Heart right ventricle (tissue), 16 donors: ENCODE measurements at regions of chr1 and their contacts with region 1.

Region 1: DNA sequence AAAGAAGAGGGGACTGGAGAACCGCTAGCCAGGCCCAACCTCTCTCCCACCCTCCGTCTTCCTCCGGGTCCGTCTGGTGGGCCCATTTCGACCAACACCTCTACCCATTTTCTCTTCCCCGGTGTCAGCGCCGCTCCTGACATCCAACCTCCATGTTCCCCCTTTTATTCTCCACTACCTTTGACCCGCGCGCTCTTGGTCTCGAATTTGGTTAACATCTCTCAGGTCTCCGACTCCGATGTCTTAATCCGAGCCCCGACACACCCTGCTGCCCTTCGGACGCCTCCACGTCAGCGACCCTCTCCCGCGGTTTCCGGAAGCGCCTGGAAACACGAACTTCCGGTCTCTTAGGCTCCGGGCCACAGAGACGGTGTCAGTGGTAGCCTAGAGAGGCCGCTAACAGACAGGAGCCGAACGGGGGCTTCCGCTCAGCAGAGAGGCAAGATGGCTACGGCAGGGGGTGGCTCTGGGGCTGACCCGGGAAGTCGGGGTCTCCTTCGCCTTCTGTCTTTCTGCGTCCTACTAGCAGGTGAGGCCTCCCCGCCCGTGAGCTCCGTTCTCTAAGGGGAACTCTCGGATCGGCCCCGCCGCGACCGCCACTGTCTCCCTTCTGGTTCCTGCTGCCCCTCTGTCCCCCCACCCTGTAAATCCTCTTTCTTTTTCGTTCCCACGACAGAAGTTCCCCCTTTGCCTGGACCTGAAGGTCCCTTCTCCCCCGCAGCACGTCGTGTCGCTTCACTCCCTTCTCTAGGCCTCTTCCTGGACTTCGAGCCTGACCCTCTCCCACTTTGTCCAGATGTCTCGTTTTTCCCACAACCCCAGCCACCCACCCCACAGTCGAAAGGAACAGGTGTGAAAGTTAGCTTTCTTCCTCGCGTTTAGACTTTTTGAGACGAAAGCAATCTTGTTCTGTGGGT is at the starts of genes COPA and NCSTN:
- DNase-seq: peak; percentile 90 to 96
- ATAC-seq: peak; percentile 98 to 100 (median 99)
- H3K4me3 ChIP-seq: peak within 1 kb of the TSS; percentile 63 to 96 (median 82)
- H3K27ac ChIP-seq: peak within 1 kb of the TSS; percentile 51 to 97 (median 90)
- H3K4me1 ChIP-seq: peaks cover 0 to 77% (median 41%) of the 10 kb centered on the region in 9 donors
- H3K27me3 ChIP-seq: no peaks in the 10 kb centered on the region
- CTCF ChIP-seq: peak in 3 of 9 donors; percentile 8 to 19 (median 15)
- total RNA-seq, gene COPA: 77.7 to 122 (median 112) TPM
- total RNA-seq, gene NCSTN: 59.5 to 87.9 (median 71.2) TPM

Region 2: DNA sequence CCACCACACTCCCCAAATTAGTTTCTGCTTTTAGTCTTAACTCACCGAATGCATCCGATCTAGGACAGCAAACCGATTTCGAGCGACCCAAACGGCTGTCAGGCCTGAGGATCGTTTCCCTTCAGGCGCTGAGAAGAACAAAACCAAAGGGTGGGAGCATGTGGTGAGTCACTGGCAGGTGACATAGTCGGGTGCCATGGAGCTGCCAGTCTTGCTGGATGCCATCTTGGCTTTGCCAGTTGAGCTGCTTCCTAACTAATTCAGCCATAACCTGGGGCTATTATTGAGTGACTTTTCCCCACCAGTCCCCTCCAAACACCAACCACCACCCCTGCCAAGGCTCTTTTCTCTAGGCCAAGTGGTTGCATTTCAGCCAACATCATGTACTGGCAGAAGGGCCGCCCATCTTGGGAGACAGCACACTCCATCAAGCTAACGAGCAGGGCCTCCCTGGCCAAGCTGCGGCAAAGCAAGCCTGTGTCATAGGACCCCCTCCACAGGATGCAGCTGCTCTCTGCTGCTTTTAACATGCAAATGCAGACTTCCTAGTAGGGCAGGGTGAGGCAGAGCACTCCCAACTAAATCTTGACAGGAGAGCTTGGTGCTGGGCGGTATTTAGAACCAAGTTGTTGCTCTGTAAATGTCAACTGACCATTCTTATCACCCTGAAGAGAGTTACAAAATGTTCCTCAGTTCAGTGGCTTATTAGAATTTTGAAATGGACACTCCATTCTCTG is 35.9 kb before region 1 on chr1:
- intact Hi-C with region 1: loop called in 1 of 10 experiments (anchors 5 kb)
- DNase-seq: no peak
- ATAC-seq: peak in 4 of 8 donors; percentile 25 to 69 (median 58)
- H3K4me3 ChIP-seq: no peak overlapping the region
- H3K27ac ChIP-seq: no peak overlapping the region
- H3K4me1 ChIP-seq: no peaks in the 10 kb centered on the region
- H3K27me3 ChIP-seq: no peaks in the 10 kb centered on the region
- CTCF ChIP-seq: no peak

Region 3: GRCh38 chr1:160362168-160362957 is 19.2 kb after region 1 on chr1:
- intact Hi-C with region 1: no loop called
- DNase-seq: no peak
- ATAC-seq: no peak
- H3K4me3 ChIP-seq: no peak overlapping the region
- H3K27ac ChIP-seq: no peak overlapping the region
- H3K4me1 ChIP-seq: no peaks in the 10 kb centered on the region
- H3K27me3 ChIP-seq: no peaks in the 10 kb centered on the region
- CTCF ChIP-seq: no peak

Region 4: DNA sequence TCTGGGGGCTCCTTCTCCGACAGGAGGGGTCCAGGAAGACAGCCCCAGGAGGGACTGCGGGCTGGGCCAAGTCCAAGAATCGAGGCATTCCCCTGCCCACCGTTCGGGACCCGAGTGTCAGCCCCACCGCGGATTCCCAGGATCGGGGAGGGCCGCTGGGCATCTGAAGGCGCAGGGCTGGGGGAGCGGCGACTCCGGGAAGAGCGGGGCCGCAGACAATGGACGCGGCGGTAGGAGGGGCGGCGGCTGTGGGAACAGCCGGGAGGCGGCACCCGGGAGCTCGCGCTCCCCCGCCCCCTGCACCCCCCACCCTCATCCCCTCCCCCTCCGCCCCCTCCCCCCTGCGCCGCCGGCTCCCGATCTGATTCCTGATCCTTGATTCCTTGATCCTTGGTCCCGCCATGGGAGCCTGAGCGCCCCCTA is 57.0 kb after region 1 on chr1 and contains the start of gene VANGL2:
- intact Hi-C with region 1: loop called in 1 of 10 experiments (anchors 2 kb)
- DNase-seq: peak; percentile 84 to 88
- ATAC-seq: peak; percentile 68 to 88 (median 82)
- H3K4me3 ChIP-seq: peak within 1 kb of the TSS; percentile 58 to 87 (median 75)
- H3K27ac ChIP-seq: peak within 1 kb of the TSS in 9 of 10 donors; percentile 49 to 80 (median 56)
- H3K4me1 ChIP-seq: peaks cover 4 to 43% (median 30%) of the 10 kb centered on the region in 9 donors
- H3K27me3 ChIP-seq: peaks cover 0 to 31% (median 0%) of the 10 kb centered on the region in 7 donors
- CTCF ChIP-seq: peak in 1 of 9 donors; percentile 8
- total RNA-seq, gene VANGL2: 1.2 to 4.1 (median 2.1) TPM

Region 5: DNA sequence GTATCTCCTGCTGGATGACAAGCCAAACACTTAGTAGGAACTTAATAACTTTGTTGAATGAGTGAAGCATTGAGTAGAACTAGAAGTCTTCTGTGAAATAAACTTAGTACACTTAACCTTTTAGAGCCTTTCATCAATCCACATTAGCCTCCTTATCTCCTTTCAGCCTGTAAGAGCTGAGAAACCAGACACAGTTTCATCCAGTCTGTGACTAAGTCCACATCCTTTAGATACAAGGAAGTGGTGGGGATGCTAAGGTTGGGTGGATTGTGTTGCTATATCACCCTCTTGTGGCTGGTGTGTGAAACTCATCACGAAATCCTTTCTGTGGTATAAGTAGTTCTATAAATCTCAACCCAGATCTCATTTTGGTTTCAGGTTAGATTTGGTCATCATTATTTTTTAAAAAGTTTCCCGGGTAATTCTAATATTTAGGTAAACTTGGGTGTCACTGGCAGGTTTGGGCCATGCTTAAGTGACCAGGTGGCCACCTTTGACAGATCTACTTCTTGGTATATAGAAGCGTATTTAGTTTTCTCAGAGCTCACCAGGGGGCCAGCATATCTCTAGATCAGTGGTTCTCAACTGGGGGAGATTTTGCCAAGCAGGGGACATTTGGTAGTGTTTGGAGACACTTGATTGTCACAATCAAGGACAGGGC is 263.9 kb after region 1 on chr1:
- intact Hi-C with region 1: loop called in 1 of 10 experiments (anchors 5 kb)
- DNase-seq: peak in 1 of 2 donors; percentile 36
- ATAC-seq: peak; percentile 69 to 92 (median 87)
- H3K4me3 ChIP-seq: no peak overlapping the region
- H3K27ac ChIP-seq: peak overlapping the region in 1 of 10 donors; percentile 39
- H3K4me1 ChIP-seq: peaks cover 0 to 12% (median 0%) of the 10 kb centered on the region in 9 donors
- H3K27me3 ChIP-seq: peaks cover 0 to 21% (median 4%) of the 10 kb centered on the region in 7 donors
- CTCF ChIP-seq: peak; percentile 41 to 77 (median 66)